Activated naive CD4-positive, alpha-beta T cell treated with anti-CD3 and anti-CD28 coated beads for 36 hours (primary cell): ENCODE measurements at regions of chr4 and their contacts with region 1.

Region 1: GRCh38 chr4:78517050-78517652 is 34.4 kb upstream of the ANXA3 start:
- DNase-seq: no peak
- H3K4me3 Mint-ChIP-seq: no peak overlapping the region
- H3K27ac Mint-ChIP-seq: no peak overlapping the region
- H3K4me1 Mint-ChIP-seq: no peaks in the 10 kb centered on the region
- H3K27me3 Mint-ChIP-seq: no peaks in the 10 kb centered on the region

Region 2: GRCh38 chr4:77959566-77960338 is 557.4 kb before region 1 on chr4:
- CTCF ChIA-PET with region 1: interaction called, 7 read pairs
- intact Hi-C with region 1: loop called (anchors 1 kb)
- DNase-seq: no peak
- H3K4me3 Mint-ChIP-seq: no peak overlapping the region
- H3K27ac Mint-ChIP-seq: no peak overlapping the region
- H3K4me1 Mint-ChIP-seq: peaks cover 16% of the 10 kb centered on the region
- H3K27me3 Mint-ChIP-seq: no peaks in the 10 kb centered on the region

Region 3: GRCh38 chr4:78056265-78057129 is 460.7 kb before region 1 on chr4:
- CTCF ChIA-PET with region 1: interaction called, 4 read pairs
- intact Hi-C with region 1: loop called (anchors 1 kb)
- DNase-seq: peak; percentile 50
- H3K4me3 Mint-ChIP-seq: peak overlapping the region; percentile 65
- H3K27ac Mint-ChIP-seq: no peak overlapping the region
- H3K4me1 Mint-ChIP-seq: peaks cover 21% of the 10 kb centered on the region
- H3K27me3 Mint-ChIP-seq: peaks cover 41% of the 10 kb centered on the region

Region 4: DNA sequence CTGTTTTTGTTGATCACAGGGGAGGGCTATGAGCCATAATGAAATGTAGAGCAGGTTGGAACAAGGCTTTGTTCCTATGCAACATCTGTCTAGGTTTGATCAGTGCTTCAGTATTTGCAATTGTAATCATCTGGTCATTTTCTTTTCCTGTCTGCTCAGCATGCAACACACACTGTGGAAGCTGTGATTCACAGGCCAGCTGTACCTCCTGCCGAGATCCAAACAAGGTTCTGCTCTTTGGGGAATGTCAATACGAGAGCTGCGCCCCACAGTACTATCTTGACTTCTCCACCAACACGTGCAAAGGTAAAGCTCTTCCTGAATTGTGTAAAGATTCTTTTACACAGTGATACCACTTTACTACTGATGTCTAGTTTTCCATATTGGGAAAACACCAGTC is 147.5 kb before region 1 on chr4:
- CTCF ChIA-PET with region 1: no interaction called
- intact Hi-C with region 1: loop called (anchors 5 kb)
- DNase-seq: no peak
- H3K4me3 Mint-ChIP-seq: no peak overlapping the region
- H3K27ac Mint-ChIP-seq: no peak overlapping the region
- H3K4me1 Mint-ChIP-seq: no peaks in the 10 kb centered on the region
- H3K27me3 Mint-ChIP-seq: no peaks in the 10 kb centered on the region

Region 5: GRCh38 chr4:78528327-78528726 is 11.2 kb after region 1 on chr4:
- CTCF ChIA-PET with region 1: interaction called, 10 read pairs
- intact Hi-C with region 1: no loop called
- DNase-seq: no peak
- H3K4me3 Mint-ChIP-seq: no peak overlapping the region
- H3K27ac Mint-ChIP-seq: no peak overlapping the region
- H3K4me1 Mint-ChIP-seq: no peaks in the 10 kb centered on the region
- H3K27me3 Mint-ChIP-seq: peaks cover 2% of the 10 kb centered on the region